A549 (cell line): ENCODE measurements at regions of chr22 and their contacts with region 1.

Region 1: DNA sequence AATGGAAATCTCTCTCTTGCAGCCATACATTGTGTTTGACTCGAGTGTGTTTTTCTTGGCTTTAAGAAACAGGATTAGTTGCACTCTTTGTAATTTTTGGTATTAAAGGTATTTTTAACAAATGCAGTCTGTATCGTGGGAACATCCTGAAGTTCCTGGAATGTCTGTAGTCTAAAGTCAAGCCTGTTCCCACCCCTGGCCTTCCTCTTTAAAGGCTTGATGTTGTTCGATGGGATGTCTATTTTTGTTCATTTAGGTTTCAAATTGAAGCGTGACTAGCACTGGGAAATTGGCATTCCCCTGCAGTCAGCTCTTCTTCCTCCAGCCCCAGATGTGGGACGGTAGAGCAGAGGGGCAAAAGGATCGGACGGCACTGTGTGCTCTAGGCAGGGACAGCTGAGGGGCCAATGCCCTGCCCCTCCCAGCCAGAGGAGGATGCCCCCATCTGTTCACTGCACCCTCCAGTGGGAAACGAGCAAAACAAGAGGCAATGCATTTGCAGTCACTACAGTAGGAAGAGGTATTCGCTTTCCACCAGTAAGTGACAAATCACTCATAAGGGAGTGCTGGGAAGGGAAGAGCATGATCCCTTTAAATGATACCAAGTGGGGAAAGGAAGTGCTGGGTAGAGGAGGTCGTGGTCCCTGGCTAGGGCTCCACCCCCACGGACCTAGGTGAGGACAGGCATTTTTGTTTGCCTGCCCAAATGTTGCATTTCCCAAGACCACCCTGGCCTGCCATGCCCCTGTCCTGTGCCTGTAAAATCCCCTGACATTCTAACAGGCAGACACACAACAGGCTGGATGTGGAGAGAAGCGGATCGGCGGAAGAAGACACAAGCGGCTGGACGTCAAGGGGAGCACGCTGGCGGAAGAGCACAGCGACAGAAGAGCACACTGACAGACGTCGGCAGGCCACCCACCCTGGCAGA is 47.4 kb upstream of the SEPTIN5 start:
- DNase-seq: no peak
- ATAC-seq: no peak
- H3K4me3 ChIP-seq: no peak overlapping the region
- H3K27ac ChIP-seq: no peak overlapping the region
- H3K4me1 ChIP-seq: peaks cover 5% of the 10 kb centered on the region; the same call in 1 of the 3 replicates
- CTCF ChIP-seq: no peak
- EP300 ChIP-seq: no peak
- POLR2A ChIP-seq: no peak
- RAD21 ChIP-seq: no peak

Region 2: GRCh38 chr22:19644314-19645223 is 22.4 kb before region 1 on chr22:
- CTCF ChIA-PET with region 1: no interaction called
- POLR2A ChIA-PET with region 1: no interaction called
- DNase-seq: no peak
- ATAC-seq: no peak
- H3K4me3 ChIP-seq: no peak overlapping the region
- H3K27ac ChIP-seq: no peak overlapping the region
- H3K4me1 ChIP-seq: no peaks in the 10 kb centered on the region
- CTCF ChIP-seq: no peak
- EP300 ChIP-seq: no peak
- POLR2A ChIP-seq: no peak
- RAD21 ChIP-seq: no peak

Region 3: GRCh38 chr22:19679522-19680101 is 12.7 kb after region 1 on chr22:
- CTCF ChIA-PET with region 1: interaction called, 28 read pairs
- POLR2A ChIA-PET with region 1: no interaction called
- DNase-seq: peak in 1 of 2 experiments; percentile 7
- ATAC-seq: peak; percentile 70 to 87; a peak in 5 of 6 replicates
- H3K4me3 ChIP-seq: no peak overlapping the region
- H3K27ac ChIP-seq: no peak overlapping the region
- H3K4me1 ChIP-seq: no peaks in the 10 kb centered on the region
- CTCF ChIP-seq: peak; percentile 47
- EP300 ChIP-seq: no peak
- POLR2A ChIP-seq: no peak
- RAD21 ChIP-seq: peak; percentile 47 to 57